ENCODE measurements at regions of chr5 and their contacts with region 1.

Region 1: GRCh38 chr5:177390363-177391300 is 6.4 kb downstream of the SLC34A1 start:
- DNase-seq: no peak
- H3K4me3 ChIP-seq: peak overlapping the region in 1 of 4 donors; percentile 40
- H3K27ac ChIP-seq: peak overlapping the region; percentile 77 to 89 (median 84)
- H3K4me1 ChIP-seq: peaks cover 32 to 57% (median 47%) of the 10 kb centered on the region in 3 donors
- H3K27me3 ChIP-seq: peaks cover 0 to 7% (median 0%) of the 10 kb centered on the region in 4 donors
- CTCF ChIP-seq: peak; percentile 98 to 100 (median 99)
- POLR2A ChIP-seq: no peak

Region 2: DNA sequence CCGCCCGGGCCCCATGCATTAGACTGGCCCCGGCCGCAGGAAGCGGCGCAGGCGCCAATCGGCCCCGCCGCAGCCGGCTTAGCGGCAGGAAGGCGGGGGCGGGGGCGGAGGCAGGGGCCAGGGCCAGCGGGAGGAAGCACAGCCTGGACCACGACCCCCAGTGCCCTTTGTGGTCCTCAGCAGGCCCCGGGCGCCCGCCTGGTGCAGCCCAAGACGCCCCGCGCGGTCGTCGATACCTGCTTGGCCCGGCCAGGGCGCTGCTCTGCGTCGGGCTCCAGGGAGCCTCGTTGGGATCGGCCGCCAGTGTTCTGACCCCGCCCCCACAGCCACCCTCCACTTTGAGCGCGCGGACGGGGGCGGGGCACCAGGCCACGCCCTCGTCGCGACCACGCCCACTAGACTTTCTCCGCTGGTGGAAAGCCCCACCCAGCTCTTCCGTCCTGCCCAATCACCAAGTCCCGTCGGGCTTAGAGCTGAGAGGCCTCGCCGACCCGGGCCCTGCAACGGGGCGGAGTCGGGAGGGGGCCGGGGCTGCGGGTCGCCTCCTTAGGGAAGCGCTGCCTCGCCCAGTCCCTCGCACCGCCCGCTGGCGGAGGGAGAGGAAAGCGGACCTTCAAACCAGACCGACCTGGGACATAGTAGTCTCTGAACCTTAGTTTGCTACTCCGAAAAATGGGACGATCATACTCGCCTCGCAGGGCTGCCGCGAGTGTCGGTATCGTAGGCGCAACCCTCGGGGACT is 106.8 kb after region 1 on chr5 and contains the start of gene PDLIM7:
- intact Hi-C with region 1: loop called (anchors 5 kb)
- DNase-seq: peak; percentile 59
- H3K4me3 ChIP-seq: peak within 1 kb of the TSS; percentile 61 to 93 (median 76)
- H3K27ac ChIP-seq: peak within 1 kb of the TSS; percentile 90 to 98 (median 94)
- H3K4me1 ChIP-seq: peaks cover 46 to 80% (median 58%) of the 10 kb centered on the region in 3 donors
- H3K27me3 ChIP-seq: peaks cover 0 to 8% (median 0%) of the 10 kb centered on the region in 4 donors
- CTCF ChIP-seq: peak in 1 of 6 experiments; percentile 21
- POLR2A ChIP-seq: peak in 2 of 4 donors; percentile 94
- total RNA-seq, gene PDLIM7: 17.1 to 81.6 (median 33.6) TPM

Region 3: GRCh38 chr5:177554474-177555111 is 164.0 kb after region 1 on chr5 and contains the start of gene FAM193B:
- intact Hi-C with region 1: no loop called
- DNase-seq: peak; percentile 76
- H3K4me3 ChIP-seq: peak within 1 kb of the TSS; percentile 83 to 97 (median 90)
- H3K27ac ChIP-seq: peak within 1 kb of the TSS; percentile 91 to 95 (median 92)
- H3K4me1 ChIP-seq: peaks cover 14 to 59% (median 14%) of the 10 kb centered on the region in 3 donors
- H3K27me3 ChIP-seq: no peaks in the 10 kb centered on the region
- CTCF ChIP-seq: peak in 4 of 6 experiments; percentile 22 to 49 (median 34)
- POLR2A ChIP-seq: no peak
- total RNA-seq, gene FAM193B: 28.5 to 52.1 (median 41.9) TPM

Measured in esophagus squamous epithelium (tissue), 5 donors.